Head of caudate nucleus (tissue), 42 donors: ENCODE measurements at regions of chr2 and their contacts with region 1.

Region 1: GRCh38 chr2:145079641-145080040 is 559.7 kb upstream of the ZEB2 start:
- DNase-seq: no peak

Region 2: GRCh38 chr2:144937910-144938709 is 141.5 kb before region 1 on chr2:
- intact Hi-C with region 1: no loop called
- DNase-seq: no peak

Region 3: DNA sequence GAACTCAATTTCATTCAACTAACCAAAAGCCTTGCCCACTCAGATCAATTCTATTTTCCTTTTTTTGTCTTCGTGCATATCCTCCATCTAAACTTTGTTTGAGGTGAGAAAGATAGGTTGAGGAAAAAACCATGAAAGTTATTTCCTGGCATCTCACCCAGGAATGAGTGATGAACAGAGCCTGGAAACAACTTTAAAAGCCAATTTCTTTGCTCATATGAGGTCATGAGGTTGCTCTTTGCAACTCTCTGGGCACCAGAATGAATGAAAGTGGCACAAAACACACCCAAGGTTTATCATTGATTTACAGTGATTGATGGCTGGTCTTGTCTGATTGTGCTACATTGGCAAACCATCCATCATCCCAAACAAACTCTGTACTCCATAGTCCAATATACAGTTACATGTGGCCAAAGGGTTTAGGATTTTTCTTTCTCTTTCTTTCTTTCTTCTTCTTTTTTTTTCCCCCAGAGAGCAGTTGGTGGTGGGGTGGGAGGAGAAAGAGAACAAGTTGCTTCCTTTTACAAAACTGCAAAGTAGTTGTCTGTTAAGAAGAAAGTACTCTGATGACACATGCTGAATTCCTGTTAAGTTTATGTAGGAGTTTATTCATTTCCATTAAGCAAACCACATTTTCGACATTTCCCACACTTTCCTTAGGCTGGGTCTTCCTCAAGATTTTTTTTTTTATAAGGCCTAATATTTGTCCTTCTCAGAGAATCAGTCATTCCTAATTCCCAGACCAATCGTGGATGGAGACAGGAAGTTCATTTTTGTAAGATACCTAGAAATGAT is 16.2 kb after region 1 on chr2:
- intact Hi-C with region 1: no loop called
- DNase-seq: no peak

Region 4: GRCh38 chr2:145199042-145199441 is 119.4 kb after region 1 on chr2:
- intact Hi-C with region 1: loop called (anchors 10 kb)
- DNase-seq: peak in 14 of 42 donors; percentile 6 to 54 (median 23)